GM12878 (cell line): ENCODE measurements at regions of chr1 and their contacts with region 1.

Region 1: DNA sequence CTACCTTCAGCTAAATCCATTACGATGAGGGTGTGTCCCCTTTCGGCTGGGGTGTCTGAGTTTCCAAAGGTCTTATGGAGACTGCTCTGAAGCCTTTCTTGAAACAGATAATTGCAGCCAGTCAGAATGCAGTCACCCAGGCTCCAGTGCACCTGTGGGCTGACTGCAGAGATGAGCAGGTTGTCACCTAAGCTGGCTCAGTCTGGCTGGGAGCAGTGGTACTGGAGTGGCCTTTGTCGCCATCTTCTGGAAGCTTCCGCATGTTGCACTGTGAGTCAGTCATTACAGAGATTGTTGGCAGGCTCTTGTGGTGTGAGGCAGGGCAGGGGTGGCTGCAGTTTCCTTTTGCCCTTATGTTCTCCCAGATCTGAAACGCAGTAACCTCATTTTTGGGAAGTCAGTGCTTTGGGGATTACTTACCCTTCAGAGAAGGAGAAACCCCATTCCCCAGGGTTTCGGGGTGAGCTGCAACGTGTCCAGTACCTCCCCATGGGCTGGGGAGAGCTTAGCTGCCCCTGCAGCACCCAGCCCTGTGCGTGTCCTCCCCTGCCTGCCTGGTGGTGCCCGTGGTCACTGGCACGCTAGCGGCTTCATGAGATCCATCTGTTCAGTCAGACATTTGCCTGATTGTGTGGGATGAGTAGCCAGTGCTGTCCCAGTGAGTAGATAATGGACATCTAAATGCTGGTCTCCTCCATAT is 48.0 kb downstream of the SMYD2 start:
- DNase-seq: peak; percentile 26
- ATAC-seq: peak; percentile 92
- H3K4me3 ChIP-seq: no peak overlapping the region
- H3K27ac ChIP-seq: no peak overlapping the region
- H3K4me1 ChIP-seq: peaks cover 4% of the 10 kb centered on the region; the same call in 1 of the 2 replicates
- H3K27me3 ChIP-seq: no peaks in the 10 kb centered on the region
- CTCF ChIP-seq: peak; percentile 89 to 93 (median 91)
- EP300 ChIP-seq: no peak
- POLR2A ChIP-seq: no peak
- RAD21 ChIP-seq: peak; percentile 99

Region 2: DNA sequence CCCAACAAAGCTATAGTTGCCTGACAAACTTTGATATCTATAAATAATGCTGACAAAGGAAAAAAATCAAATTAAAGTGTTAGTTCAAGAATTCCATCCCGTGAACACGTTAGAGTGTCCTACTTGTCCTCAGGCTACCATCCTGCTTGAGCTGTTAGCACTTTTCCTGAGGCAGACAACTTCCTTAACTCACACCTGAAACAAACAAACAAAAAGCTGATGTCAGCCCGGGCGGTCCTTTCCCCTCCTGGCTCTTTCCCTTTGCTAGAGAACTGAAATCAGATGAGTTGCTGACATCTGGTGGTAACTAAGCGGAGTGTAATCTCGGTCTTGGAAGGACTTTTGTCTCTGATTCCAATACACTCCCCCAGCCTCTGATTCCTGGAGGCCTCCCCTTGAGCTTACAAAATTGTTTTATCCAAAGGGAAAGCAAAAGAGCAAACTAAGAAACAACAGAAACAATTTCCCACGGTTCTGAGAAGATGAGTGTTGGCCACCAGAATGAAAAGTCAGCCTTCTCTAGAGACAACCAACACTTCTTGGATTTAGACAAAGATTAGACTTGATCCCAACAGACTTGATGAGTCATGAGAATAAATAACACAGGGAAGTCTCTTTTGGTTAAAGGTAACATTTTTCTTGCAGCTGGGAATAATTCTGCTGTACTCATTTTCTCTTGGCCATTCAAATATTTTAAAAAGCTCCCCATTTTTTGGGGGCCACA is 205.7 kb before region 1 on chr1:
- CTCF ChIA-PET with region 1: interaction called, 5 read pairs
- POLR2A ChIA-PET with region 1: no interaction called
- RAD21 ChIA-PET with region 1: interaction called, 4 read pairs
- SMC1A ChIA-PET with region 1: no interaction called
- in situ Hi-C with region 1: no loop called
- intact Hi-C with region 1: loop called (anchors 5 kb)
- DNase-seq: no peak
- ATAC-seq: peak; percentile 93
- H3K4me3 ChIP-seq: no peak overlapping the region
- H3K27ac ChIP-seq: no peak overlapping the region
- H3K4me1 ChIP-seq: no peaks in the 10 kb centered on the region
- H3K27me3 ChIP-seq: no peaks in the 10 kb centered on the region
- CTCF ChIP-seq: peak; percentile 44 to 69 (median 49); a peak in 5 of 6 replicates
- EP300 ChIP-seq: no peak
- POLR2A ChIP-seq: no peak
- RAD21 ChIP-seq: peak; percentile 77

Region 3: GRCh38 chr1:214271174-214271858 is 57.6 kb before region 1 on chr1:
- CTCF ChIA-PET with region 1: interaction called, 91 read pairs
- POLR2A ChIA-PET with region 1: interaction called, 3 read pairs
- RAD21 ChIA-PET with region 1: interaction called, 8 read pairs
- SMC1A ChIA-PET with region 1: interaction called, 52 read pairs
- in situ Hi-C with region 1: loop called (anchors 5 kb)
- intact Hi-C with region 1: no loop called
- DNase-seq: no peak
- ATAC-seq: no peak
- H3K4me3 ChIP-seq: no peak overlapping the region
- H3K27ac ChIP-seq: no peak overlapping the region
- H3K4me1 ChIP-seq: no peaks in the 10 kb centered on the region
- H3K27me3 ChIP-seq: no peaks in the 10 kb centered on the region; a peak in 1 of 4 replicates
- CTCF ChIP-seq: peak; percentile 18 to 37 (median 23); a peak in 2 of 6 replicates
- EP300 ChIP-seq: no peak
- POLR2A ChIP-seq: no peak
- RAD21 ChIP-seq: peak; percentile 54

Region 4: GRCh38 chr1:214349781-214350180 is 20.9 kb after region 1 on chr1:
- CTCF ChIA-PET with region 1: interaction called, 20 read pairs
- POLR2A ChIA-PET with region 1: no interaction called
- RAD21 ChIA-PET with region 1: interaction called, 6 read pairs
- SMC1A ChIA-PET with region 1: interaction called, 8 read pairs
- in situ Hi-C with region 1: no loop called
- intact Hi-C with region 1: no loop called
- DNase-seq: no peak
- ATAC-seq: no peak
- H3K4me3 ChIP-seq: no peak overlapping the region
- H3K27ac ChIP-seq: no peak overlapping the region
- H3K4me1 ChIP-seq: no peaks in the 10 kb centered on the region
- H3K27me3 ChIP-seq: peaks cover 0 to 2% of the 10 kb centered on the region in 2 experiments; a peak in 1 of 4 replicates
- CTCF ChIP-seq: no peak
- EP300 ChIP-seq: no peak
- POLR2A ChIP-seq: no peak
- RAD21 ChIP-seq: no peak

Region 5: DNA sequence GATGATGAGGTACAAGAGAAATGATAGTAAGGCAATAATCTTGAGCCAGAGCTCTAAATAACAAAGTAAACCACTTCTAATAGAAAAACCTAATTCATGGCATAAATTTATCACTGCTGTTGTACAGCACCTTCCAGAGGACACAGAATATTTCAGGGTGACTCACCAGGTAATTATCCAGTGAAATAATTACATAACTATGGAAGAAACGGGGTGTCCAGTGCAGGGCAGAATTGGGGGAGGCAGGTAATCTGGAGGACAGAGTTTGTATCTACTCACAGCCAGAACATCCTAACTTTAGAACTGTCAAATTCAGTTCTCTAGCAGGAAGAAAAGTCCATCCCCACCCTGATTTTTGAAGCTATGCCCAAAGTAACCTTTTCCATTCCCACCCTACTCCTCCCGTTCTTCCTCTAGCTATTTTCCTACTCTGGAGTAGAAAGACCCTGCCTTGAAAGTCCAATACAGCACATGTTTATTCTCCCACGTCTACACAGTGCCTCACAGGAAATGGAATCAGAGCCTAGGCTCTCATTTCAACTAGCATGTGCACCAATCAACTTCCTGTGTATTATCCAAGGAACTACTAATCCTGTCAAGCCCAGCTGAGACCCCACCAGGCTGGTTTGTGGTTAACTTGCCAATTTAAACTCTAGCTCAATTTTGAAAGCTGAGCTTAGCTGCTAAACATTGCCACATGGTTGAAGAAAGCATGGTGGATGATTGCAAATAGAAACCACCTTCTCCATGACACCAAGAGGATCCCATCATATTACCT is 125.9 kb after region 1 on chr1:
- CTCF ChIA-PET with region 1: interaction called, 15 read pairs
- POLR2A ChIA-PET with region 1: no interaction called
- RAD21 ChIA-PET with region 1: interaction called, 4 read pairs
- SMC1A ChIA-PET with region 1: interaction called, 18 read pairs
- in situ Hi-C with region 1: no loop called
- intact Hi-C with region 1: no loop called
- DNase-seq: no peak
- ATAC-seq: peak; percentile 24; the same call in 1 of the 3 replicates
- H3K4me3 ChIP-seq: no peak overlapping the region
- H3K27ac ChIP-seq: no peak overlapping the region
- H3K4me1 ChIP-seq: no peaks in the 10 kb centered on the region
- H3K27me3 ChIP-seq: no peaks in the 10 kb centered on the region
- CTCF ChIP-seq: no peak
- EP300 ChIP-seq: no peak
- POLR2A ChIP-seq: no peak
- RAD21 ChIP-seq: no peak

Region 6: DNA sequence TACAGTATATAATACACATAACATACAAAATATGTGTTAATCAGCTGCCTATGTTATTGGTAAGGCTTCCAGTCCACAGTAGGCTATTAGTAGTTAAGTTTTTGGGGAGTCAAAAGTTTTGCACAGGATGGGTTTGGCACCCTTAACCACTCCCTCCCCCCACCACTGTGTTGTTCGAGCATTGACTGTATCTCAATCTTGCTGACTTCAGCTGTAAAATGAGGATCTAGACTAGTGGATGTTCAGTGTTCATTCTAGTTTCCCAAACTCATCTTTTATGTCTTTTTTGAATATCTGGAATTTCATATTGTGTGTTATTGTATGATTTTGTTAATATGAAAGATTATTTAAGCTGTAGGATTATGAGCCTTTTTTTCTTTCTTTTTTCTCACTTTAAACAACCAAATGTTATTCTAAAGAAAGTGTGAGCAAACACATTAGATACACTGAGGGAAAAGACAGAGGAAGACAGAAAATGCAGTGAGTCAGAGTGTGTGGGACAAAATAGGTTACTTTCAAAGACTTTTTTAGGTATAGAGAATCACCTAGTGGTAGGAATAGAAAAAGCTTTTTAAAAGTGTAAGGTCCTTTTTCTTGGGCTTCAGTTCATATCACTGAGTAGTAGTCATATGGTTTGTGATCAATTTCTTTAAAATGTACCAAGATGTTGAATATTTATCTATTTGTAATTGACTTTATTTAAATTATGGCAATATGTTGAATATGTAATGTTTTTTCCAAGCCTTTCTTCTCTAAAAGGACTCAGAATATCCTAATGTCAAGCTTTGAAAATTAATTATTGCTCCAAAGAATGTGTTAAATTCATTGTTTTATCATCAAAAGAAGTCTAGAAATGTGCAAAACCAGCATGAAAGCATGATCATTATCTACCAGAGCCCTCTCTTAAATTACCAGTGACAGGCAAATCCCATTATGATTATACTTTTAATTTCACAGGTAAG is 256.2 kb after region 1 on chr1:
- CTCF ChIA-PET with region 1: interaction called, 597 read pairs
- POLR2A ChIA-PET with region 1: interaction called, 5 read pairs
- RAD21 ChIA-PET with region 1: interaction called, 207 read pairs
- SMC1A ChIA-PET with region 1: interaction called, 292 read pairs
- in situ Hi-C with region 1: loop called (anchors 5 kb)
- intact Hi-C with region 1: loop called (anchors 1 kb)
- DNase-seq: no peak
- ATAC-seq: peak; percentile 90
- H3K4me3 ChIP-seq: no peak overlapping the region
- H3K27ac ChIP-seq: no peak overlapping the region
- H3K4me1 ChIP-seq: no peaks in the 10 kb centered on the region
- H3K27me3 ChIP-seq: no peaks in the 10 kb centered on the region
- CTCF ChIP-seq: peak; percentile 40 to 72 (median 69); a peak in 5 of 6 replicates
- EP300 ChIP-seq: no peak
- POLR2A ChIP-seq: no peak
- RAD21 ChIP-seq: peak; percentile 73